ENCODE measurements at regions of chr9 and their contacts with region 1.

Region 1: GRCh38 chr9:83688921-83689320 is 18.8 kb downstream of the UBQLN1 start:
- DNase-seq: no peak
- ATAC-seq: no peak
- H3K4me3 ChIP-seq: no peak overlapping the region
- H3K4me3 Mint-ChIP-seq: no peak overlapping the region
- H3K27ac ChIP-seq: no peak overlapping the region
- H3K27ac Mint-ChIP-seq: no peak overlapping the region
- H3K4me1 ChIP-seq: peaks cover 35% of the 10 kb centered on the region
- H3K4me1 Mint-ChIP-seq: peaks cover 77% of the 10 kb centered on the region
- H3K27me3 ChIP-seq: no peaks in the 10 kb centered on the region
- H3K27me3 Mint-ChIP-seq: no peaks in the 10 kb centered on the region
- CTCF ChIP-seq: no peak

Region 2: DNA sequence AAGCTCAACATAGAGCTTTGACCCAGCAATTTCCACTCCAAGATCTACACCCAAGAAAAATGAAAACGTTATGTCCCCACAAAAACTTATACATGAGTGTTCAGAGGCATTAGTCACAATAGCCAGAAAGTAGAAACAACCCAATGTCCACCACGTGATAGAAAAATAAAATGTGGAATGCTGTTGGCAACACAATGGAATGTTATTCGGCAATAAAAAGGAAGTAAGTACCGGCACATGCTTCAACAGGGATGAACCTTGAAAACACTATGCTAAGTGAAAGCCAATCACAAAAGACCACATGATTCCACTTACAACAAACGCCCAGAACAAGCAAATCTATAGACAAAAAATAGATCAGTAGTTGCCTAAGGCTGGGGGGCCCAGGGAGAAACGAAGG is 12.8 kb after region 1 on chr9:
- CTCF ChIA-PET with region 1: interaction called, 7 read pairs
- POLR2A ChIA-PET with region 1: interaction called, 3 read pairs
- intact Hi-C with region 1: loop called (anchors 2 kb)
- DNase-seq: no peak
- ATAC-seq: no peak
- H3K4me3 ChIP-seq: no peak overlapping the region
- H3K4me3 Mint-ChIP-seq: peak overlapping the region; percentile 16
- H3K27ac ChIP-seq: no peak overlapping the region
- H3K27ac Mint-ChIP-seq: peak overlapping the region; percentile 2
- H3K4me1 ChIP-seq: peaks cover 71% of the 10 kb centered on the region
- H3K4me1 Mint-ChIP-seq: peaks cover 87% of the 10 kb centered on the region
- H3K27me3 ChIP-seq: no peaks in the 10 kb centered on the region
- H3K27me3 Mint-ChIP-seq: no peaks in the 10 kb centered on the region
- CTCF ChIP-seq: no peak

Measured in CD8-positive, alpha-beta T cell (primary cell).